Left cardiac atrium (tissue), 4 donors: ENCODE measurements at regions of chr14 and their contacts with region 1.

Region 1: GRCh38 chr14:29548948-29549370 is 378.7 kb downstream of the PRKD1 start:
- DNase-seq: no peak
- ATAC-seq: peak; percentile 72 to 82

Region 2: GRCh38 chr14:29321646-29322045 is 227.3 kb before region 1 on chr14:
- intact Hi-C with region 1: no loop called
- DNase-seq: no peak
- ATAC-seq: no peak

Region 3: GRCh38 chr14:29627137-29627536 is 78.2 kb after region 1 on chr14:
- intact Hi-C with region 1: no loop called
- DNase-seq: no peak
- ATAC-seq: no peak

Region 4: DNA sequence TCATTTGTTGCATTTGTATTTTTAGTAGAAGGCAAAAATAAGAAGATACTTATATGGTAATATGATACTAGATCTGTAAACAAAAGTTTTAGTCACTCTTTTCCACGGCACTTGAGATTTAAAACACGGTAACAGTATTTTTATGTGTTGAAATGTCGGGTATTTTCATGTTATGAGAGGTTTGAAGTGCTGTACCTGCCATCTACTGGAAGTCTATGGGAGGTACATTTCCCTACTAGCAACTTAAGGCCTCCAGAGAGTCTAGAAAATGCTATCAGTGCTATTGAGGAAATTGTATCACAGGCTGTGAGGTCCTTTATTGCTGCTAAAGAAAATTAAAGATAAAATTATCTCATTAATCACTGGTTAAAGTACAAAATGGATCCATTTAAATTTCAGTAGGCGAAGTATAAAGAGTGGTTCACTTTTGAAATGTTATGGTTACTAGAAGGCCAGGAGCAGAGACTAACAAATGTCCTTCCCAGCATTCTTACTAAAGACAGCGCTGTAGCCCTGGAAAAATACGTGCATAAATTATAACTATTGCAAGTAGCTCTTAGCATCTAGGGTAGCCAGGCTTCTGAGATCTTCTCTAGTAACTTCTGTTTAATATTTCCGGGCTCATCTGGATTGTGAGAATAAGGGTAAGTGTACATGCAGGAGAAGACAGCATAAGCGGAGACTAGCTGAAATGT is 456.3 kb after region 1 on chr14:
- intact Hi-C with region 1: loop called (anchors 2 to 5 kb)
- DNase-seq: no peak
- ATAC-seq: peak; percentile 78 to 82

Region 5: GRCh38 chr14:30214461-30215090 is 665.6 kb after region 1 on chr14:
- intact Hi-C with region 1: loop called in 1 of 2 experiments (anchors 5 kb)
- DNase-seq: no peak
- ATAC-seq: peak; percentile 34 to 67